WTC11 (cell line): ENCODE measurements at regions of chr9 and their contacts with region 1.

Region 1: GRCh38 chr9:122912964-122913673 is at the start of gene ZBTB6:
- DNase-seq: peak; percentile 62
- ATAC-seq: peak; percentile 94
- H3K4me3 Mint-ChIP-seq: peak within 1 kb of the TSS; percentile 86
- H3K27ac Mint-ChIP-seq: peak within 1 kb of the TSS; percentile 96
- H3K4me1 Mint-ChIP-seq: peaks cover 12% of the 10 kb centered on the region; the same call in 1 of the 2 replicates
- H3K27me3 Mint-ChIP-seq: no peaks in the 10 kb centered on the region
- CTCF ChIP-seq: no peak
- total RNA-seq, gene ZBTB6: 8.2 to 9.6 TPM (median 9.0 TPM) in 3 replicates

Region 2: GRCh38 chr9:122931226-122932121 is 18.4 kb after region 1 on chr9 and contains the start of gene ZBTB26:
- CTCF ChIA-PET with region 1: interaction called, 5 read pairs
- POLR2A ChIA-PET with region 1: interaction called, 24 read pairs
- DNase-seq: peak; percentile 96
- ATAC-seq: peak; percentile 97
- H3K4me3 Mint-ChIP-seq: no peak within 1 kb of the TSS
- H3K27ac Mint-ChIP-seq: peak within 1 kb of the TSS; percentile 99
- H3K4me1 Mint-ChIP-seq: peaks cover 8% of the 10 kb centered on the region
- H3K27me3 Mint-ChIP-seq: no peaks in the 10 kb centered on the region
- CTCF ChIP-seq: no peak
- total RNA-seq, gene ZBTB26: 6.3 to 7.8 TPM (median 7.3 TPM) in 3 replicates

Region 3: DNA sequence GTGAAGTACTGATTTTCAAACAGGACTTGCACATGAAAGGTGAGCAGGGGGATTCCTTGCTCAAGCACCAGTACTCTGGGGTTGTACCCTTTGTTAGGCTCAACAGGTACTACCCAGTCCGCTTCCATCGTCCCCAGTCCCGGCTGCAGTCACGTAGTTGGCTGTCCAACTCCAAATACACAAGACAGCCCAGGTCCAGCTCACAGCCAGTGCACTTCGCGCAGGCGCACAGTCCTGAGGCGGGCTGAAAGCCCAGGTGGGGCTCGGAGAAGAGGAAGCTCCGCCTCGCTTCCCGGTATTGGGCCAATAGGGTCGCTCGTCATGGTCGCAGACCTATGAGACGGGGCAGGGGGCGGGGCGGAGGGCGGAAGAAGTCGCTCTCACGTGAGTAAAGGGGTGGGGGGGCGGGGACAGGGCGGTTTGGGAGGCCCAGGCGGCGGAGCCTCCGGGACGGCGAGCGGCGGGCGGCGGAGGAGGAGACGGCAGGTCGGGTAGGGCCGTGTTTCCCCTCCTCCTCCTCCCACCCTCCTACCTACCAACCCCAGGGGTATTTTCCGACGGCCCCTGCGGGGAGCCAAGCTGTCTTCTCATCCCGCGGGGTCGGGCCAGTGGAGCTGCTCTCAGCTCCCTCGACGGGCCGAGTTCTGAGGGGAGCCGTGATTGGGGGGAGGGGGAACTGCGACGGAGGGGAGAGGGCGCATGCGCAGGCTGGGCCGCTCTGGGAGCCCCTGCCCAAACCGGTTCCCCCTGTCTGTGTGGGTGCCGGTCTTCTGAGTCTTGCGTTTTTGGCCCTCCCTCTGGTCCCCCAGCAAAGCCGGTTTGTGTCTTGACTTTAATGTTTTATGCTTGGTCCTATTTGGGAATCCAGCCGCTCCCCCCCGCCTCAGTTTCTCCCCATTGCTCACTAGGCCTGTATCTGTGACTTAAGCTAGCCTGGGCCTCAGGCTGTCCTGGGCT is 27.8 kb after region 1 on chr9 and contains the start of gene RABGAP1:
- CTCF ChIA-PET with region 1: interaction called, 5 read pairs
- POLR2A ChIA-PET with region 1: interaction called, 44 read pairs
- DNase-seq: peak; percentile 100
- ATAC-seq: peak; percentile 99
- H3K4me3 Mint-ChIP-seq: peak within 1 kb of the TSS; percentile 92
- H3K27ac Mint-ChIP-seq: peak within 1 kb of the TSS; percentile 99
- H3K4me1 Mint-ChIP-seq: peaks cover 21% of the 10 kb centered on the region
- H3K27me3 Mint-ChIP-seq: no peaks in the 10 kb centered on the region; the same call in 1 of the 2 replicates
- CTCF ChIP-seq: no peak
- total RNA-seq, gene RABGAP1: 38.1 to 42.9 TPM (median 41.1 TPM) in 3 replicates